ENCODE measurements at regions of chr7 and their contacts with region 1.

Region 1: GRCh38 chr7:38178004-38178694 is at the start of gene STARD3NL:
- DNase-seq: peak; percentile 90
- H3K4me3 Mint-ChIP-seq: peak within 1 kb of the TSS; percentile 94
- H3K27ac Mint-ChIP-seq: peak within 1 kb of the TSS; percentile 87
- H3K4me1 Mint-ChIP-seq: peaks cover 46% of the 10 kb centered on the region
- H3K27me3 Mint-ChIP-seq: no peaks in the 10 kb centered on the region
- total RNA-seq, gene STARD3NL: 28.5 and 31.5 TPM in 2 replicates

Region 2: DNA sequence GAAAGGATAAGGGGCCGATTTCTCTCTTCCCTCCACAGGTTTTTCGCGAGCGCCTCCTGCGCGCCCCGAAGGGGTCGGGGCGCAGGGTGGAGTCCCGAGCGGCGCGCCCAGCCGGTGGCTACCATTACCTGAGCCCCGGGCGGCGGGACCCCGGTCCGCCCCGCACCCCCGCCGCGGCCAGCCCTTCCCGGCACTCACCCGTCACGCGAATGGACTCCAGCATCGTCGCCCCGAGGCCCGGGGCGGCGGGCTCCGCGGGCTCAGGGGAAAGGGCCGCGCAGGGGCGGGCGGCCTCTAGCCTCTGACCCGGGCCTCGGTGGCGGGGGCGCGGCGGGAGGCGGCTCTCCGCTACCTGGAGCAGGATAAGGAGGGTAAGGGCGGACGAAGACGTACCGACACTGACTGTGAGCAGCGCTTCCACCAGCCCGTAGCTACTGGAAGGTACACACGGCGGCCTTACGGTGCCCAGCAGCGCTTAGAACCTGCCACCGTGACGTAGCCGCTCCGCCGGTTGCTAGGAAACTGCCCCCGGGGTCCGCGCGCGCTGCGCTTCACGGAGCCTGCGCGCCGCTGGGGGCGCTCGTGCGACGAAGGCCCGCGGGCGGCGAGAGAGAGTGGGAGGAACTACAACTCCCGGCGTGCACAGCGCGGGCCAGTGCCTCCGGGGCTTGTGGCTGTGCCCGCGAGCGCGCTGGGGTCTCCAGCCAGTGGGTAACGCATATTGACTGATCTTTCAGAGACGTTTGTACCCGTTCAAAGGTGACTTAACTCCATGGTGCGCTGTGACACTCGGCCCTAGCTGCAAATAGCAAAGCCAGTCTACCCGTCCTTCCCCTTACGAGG is 1811.2 kb before region 1 on chr7:
- intact Hi-C with region 1: loop called (anchors 10 kb)
- DNase-seq: peak; percentile 91
- H3K4me3 Mint-ChIP-seq: peak overlapping the region; percentile 91
- H3K27ac Mint-ChIP-seq: peak overlapping the region; percentile 67
- H3K4me1 Mint-ChIP-seq: no peaks in the 10 kb centered on the region
- H3K27me3 Mint-ChIP-seq: peaks cover 31% of the 10 kb centered on the region

Region 3: DNA sequence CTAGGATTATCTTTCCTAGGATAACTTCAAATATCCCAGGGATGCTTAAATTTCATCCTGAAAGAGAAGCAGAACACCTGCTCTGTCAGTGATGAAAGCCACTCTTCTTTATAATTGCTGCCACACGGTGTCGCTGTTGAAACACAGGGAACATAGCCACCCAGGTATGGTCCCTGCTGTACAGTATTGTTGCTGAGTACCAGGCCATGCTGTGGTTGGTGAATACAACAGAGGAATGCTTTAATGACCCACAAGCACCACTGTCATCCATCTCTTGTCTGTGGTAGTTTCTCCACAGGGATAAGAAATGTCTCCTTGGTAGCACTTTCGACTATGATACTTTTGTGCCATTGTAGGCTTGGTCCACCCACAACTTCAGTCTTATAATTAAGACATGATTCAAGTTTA is 70.7 kb before region 1 on chr7:
- intact Hi-C with region 1: loop called (anchors 5 kb)
- DNase-seq: peak; percentile 31
- H3K4me3 Mint-ChIP-seq: no peak overlapping the region
- H3K27ac Mint-ChIP-seq: no peak overlapping the region
- H3K4me1 Mint-ChIP-seq: no peaks in the 10 kb centered on the region
- H3K27me3 Mint-ChIP-seq: peaks cover 39% of the 10 kb centered on the region

Region 4: DNA sequence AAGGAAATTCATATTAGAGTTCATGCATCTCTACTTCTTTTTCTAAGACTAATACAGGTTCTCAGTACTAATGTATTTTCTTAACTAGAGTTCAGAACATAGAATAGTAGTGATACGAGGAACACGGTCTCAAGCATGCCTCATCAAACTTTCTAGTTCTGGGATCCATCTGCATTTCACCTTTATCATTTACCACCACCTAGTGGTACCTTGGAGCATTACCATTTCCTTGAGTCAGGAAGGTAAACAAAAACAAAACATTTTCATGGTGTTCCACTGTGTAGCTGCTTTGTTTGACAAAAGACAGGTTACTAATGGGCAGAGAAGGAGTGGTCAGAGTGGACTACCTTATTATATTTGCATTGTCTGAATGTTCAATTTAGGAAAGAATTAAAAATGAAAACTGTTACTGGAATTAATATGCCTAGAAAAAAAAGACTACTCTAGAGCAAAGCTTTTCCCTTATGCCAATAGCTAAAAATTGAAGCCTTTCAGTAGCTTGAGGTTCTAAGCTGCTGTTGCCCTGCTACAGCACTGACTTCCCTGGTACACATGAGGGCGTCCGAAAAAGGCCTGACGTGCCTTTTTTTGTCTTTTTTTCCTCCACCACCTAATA is 44.4 kb after region 1 on chr7:
- intact Hi-C with region 1: loop called (anchors 2 kb)
- DNase-seq: peak; percentile 25
- H3K4me3 Mint-ChIP-seq: no peak overlapping the region
- H3K27ac Mint-ChIP-seq: no peak overlapping the region
- H3K4me1 Mint-ChIP-seq: peaks cover 35% of the 10 kb centered on the region
- H3K27me3 Mint-ChIP-seq: no peaks in the 10 kb centered on the region

Region 5: DNA sequence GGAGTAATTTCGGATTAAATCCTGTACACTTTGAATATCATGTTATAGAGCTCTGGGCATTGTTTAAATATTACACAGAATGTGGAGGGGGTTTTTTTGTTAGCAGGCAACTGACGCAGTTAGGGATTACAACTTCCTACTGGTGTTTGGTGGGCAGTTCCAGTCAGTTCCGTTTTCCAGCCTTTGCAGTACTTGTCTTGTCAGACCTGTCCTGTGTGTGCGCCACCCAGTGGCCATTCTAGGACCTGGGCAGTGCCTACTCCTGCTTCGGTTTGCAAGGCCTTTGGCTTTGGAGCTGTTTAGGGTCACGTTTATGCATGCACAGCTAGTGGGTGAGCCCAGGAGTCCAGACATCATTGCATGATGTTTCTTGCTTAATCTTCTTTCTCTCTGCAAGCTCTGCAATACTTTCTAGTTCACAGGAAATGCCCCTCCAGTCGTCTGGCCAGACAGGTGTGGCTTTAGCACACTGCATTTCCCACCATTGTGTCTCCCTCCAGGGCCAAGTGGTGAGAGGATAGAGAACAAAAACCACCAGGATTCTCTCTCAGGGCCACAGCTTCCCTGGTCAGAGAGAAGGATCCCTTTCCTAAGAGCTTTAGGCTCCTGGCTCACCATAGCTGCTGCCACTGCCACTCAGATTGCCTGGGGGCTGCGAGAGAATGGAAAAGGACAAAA is 191.8 kb after region 1 on chr7:
- intact Hi-C with region 1: loop called (anchors 2 kb)
- DNase-seq: peak; percentile 61
- H3K4me3 Mint-ChIP-seq: no peak overlapping the region
- H3K27ac Mint-ChIP-seq: peak overlapping the region; percentile 41
- H3K4me1 Mint-ChIP-seq: peaks cover 40% of the 10 kb centered on the region
- H3K27me3 Mint-ChIP-seq: no peaks in the 10 kb centered on the region

Region 6: GRCh38 chr7:38463277-38464225 is 285.4 kb after region 1 on chr7:
- intact Hi-C with region 1: loop called (anchors 5 kb)
- DNase-seq: peak; percentile 61
- H3K4me3 Mint-ChIP-seq: peak overlapping the region; percentile 29
- H3K27ac Mint-ChIP-seq: peak overlapping the region; percentile 61
- H3K4me1 Mint-ChIP-seq: peaks cover 20% of the 10 kb centered on the region
- H3K27me3 Mint-ChIP-seq: peaks cover 5% of the 10 kb centered on the region

Region 7: GRCh38 chr7:38908759-38909335 is 730.7 kb after region 1 on chr7 and contains the start of gene VPS41:
- intact Hi-C with region 1: loop called (anchors 5 kb)
- DNase-seq: peak; percentile 72
- H3K4me3 Mint-ChIP-seq: peak within 1 kb of the TSS; percentile 97
- H3K27ac Mint-ChIP-seq: peak within 1 kb of the TSS; percentile 93
- H3K4me1 Mint-ChIP-seq: peaks cover 38% of the 10 kb centered on the region
- H3K27me3 Mint-ChIP-seq: peaks cover 2% of the 10 kb centered on the region
- total RNA-seq, gene VPS41: 52.9 and 56.3 TPM in 2 replicates